ENCODE measurements at regions of chr17 and their contacts with region 1.

Region 1: DNA sequence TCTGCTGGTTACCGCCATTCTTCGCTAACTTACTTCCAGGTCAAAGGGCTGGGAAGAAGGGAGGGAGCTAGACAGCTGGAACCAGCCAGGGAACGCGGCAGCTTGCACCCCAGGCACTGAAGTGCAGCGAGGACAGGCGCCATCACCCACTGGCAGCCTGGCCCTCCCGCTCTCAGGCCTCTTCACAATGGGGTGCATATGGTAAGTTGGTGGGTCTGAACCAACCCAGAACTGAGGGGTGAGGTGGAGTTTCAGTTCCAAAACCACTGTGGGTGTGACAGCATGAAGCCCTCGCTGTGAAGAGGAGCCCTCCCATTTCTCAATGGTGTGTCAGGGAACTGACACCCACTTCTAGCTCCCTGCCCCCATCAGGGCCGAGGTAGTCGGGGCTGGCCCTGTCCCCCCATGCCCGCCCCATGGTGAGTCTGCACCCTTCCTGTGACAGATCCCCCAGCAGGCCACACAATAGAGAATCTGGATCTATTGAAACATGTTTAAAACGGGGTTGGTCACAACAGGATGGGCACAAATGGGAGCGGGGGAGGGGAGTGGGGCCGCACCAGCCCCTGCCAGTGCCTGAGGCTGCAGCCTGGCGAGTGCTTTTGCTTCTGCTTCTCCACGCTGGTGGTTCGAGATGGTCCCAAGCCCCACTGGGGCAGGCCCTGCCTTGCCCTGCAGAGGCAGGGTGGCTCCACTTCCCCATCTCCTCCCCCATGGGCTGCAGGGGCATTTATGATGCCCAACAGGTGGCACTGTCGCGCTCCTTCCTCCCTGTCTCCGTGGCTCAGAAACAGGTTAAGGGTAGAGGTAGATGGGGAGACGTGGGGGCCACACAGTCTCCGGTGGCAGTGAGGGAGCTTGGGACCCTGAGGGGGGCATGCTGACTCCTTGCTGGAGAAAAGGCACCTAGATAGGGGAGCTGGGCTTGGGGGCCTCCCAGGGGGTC is 2.3 kb downstream of the LIMD2 start:
- DNase-seq: peak; percentile 77 to 92 (median 84)
- ATAC-seq: peak; percentile 33
- H3K4me3 ChIP-seq: peak overlapping the region; percentile 98
- H3K4me3 Mint-ChIP-seq: peak overlapping the region; percentile 100
- H3K27ac ChIP-seq: peak overlapping the region; percentile 73 to 91
- H3K27ac Mint-ChIP-seq: peak overlapping the region; percentile 100
- H3K4me1 ChIP-seq: peaks cover 78% of the 10 kb centered on the region
- H3K4me1 Mint-ChIP-seq: peaks cover 74% of the 10 kb centered on the region
- H3K27me3 ChIP-seq: no peaks in the 10 kb centered on the region
- H3K27me3 Mint-ChIP-seq: peaks cover 5% of the 10 kb centered on the region
- CTCF ChIP-seq: peak; percentile 82

Region 2: GRCh38 chr17:63349478-63350000 is 348.1 kb before region 1 on chr17:
- CTCF ChIA-PET with region 1: no interaction called
- POLR2A ChIA-PET with region 1: no interaction called
- intact Hi-C with region 1: no loop called
- DNase-seq: no peak
- ATAC-seq: no peak
- H3K4me3 ChIP-seq: no peak overlapping the region
- H3K4me3 Mint-ChIP-seq: no peak overlapping the region
- H3K27ac ChIP-seq: no peak overlapping the region
- H3K27ac Mint-ChIP-seq: no peak overlapping the region
- H3K4me1 ChIP-seq: no peaks in the 10 kb centered on the region
- H3K4me1 Mint-ChIP-seq: no peaks in the 10 kb centered on the region
- H3K27me3 ChIP-seq: no peaks in the 10 kb centered on the region
- H3K27me3 Mint-ChIP-seq: no peaks in the 10 kb centered on the region
- CTCF ChIP-seq: no peak

Region 3: DNA sequence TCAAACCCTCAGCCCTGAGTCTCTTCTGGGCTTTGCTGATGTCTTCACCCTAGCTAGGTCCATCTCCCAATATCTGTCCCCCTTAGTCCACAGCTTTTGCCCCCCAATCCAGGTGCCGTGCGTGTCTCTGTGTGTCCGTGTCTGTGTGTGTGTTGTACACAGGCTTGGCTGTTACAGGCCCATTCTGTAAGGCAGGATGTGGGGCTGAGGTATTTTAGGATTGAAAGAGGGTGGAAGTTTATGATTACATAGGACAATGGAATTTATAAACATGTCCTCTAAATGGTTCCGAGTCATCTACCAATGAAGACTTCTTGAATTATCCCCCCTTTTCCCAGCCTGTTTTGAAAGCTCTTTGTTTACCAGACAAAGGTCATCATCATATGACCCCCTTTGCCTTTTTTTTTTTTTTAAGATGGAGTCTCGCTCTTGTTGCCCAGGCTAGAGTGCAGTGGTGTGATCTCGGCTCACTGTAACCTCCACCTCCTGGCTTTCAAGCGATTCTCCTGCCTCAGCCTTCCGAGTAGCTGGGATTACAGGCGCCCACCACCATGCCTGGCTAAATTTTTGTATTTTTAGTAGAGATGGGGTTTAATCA is 198.9 kb before region 1 on chr17:
- CTCF ChIA-PET with region 1: no interaction called
- POLR2A ChIA-PET with region 1: no interaction called
- intact Hi-C with region 1: no loop called
- DNase-seq: no peak
- ATAC-seq: no peak
- H3K4me3 ChIP-seq: no peak overlapping the region
- H3K4me3 Mint-ChIP-seq: no peak overlapping the region
- H3K27ac ChIP-seq: no peak overlapping the region
- H3K27ac Mint-ChIP-seq: no peak overlapping the region
- H3K4me1 ChIP-seq: no peaks in the 10 kb centered on the region
- H3K4me1 Mint-ChIP-seq: no peaks in the 10 kb centered on the region
- H3K27me3 ChIP-seq: no peaks in the 10 kb centered on the region
- H3K27me3 Mint-ChIP-seq: peaks cover 12% of the 10 kb centered on the region
- CTCF ChIP-seq: no peak

Region 4: GRCh38 chr17:63537991-63538692 is 159.5 kb before region 1 on chr17:
- CTCF ChIA-PET with region 1: no interaction called
- POLR2A ChIA-PET with region 1: no interaction called
- intact Hi-C with region 1: no loop called
- DNase-seq: peak in 1 of 14 experiments; percentile 7
- ATAC-seq: no peak
- H3K4me3 ChIP-seq: no peak overlapping the region
- H3K4me3 Mint-ChIP-seq: no peak overlapping the region
- H3K27ac ChIP-seq: no peak overlapping the region
- H3K27ac Mint-ChIP-seq: no peak overlapping the region
- H3K4me1 ChIP-seq: peaks cover 9% of the 10 kb centered on the region
- H3K4me1 Mint-ChIP-seq: peaks cover 4% of the 10 kb centered on the region
- H3K27me3 ChIP-seq: peaks cover 19 to 22% of the 10 kb centered on the region in 2 experiments
- H3K27me3 Mint-ChIP-seq: peaks cover 32% of the 10 kb centered on the region
- CTCF ChIP-seq: no peak

Region 5: DNA sequence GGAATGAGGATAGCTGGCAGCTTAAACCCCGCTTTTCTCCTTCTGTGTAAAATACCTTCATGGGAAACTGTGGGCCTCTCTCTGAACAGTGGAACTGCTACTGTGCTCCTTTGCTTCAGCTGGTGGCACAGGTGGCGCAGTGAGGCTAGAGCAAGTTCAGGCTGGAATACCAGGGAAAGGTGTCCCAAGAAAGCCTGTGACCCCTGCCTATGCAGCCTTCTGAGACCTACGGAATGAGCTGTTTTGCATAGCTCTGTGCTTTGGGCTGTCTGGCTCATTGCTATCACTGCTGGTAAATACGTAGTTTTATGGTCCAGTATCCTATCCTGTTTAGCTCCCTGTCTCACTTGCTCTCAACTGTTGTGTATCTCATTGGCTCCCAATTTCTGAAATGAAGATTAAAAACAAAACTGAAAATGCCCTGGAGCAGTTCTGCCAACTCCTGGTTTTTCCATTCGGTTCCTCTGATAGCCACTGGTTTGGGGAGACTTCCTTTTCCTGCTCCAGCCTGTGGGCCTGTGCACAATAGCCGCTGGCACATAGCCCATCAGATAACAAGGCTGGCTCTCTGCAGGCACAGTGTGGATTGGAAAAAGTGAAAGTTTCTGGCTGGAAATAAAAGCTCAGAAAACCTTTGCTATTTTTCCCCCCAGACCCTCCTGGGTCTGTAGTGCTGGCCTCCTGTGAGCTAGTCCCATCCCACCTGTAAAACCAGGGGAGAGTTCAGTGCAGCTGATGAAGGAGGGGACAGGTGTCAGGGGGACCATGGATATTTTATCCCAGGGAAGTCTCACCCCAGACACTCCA is 21.8 kb before region 1 on chr17:
- CTCF ChIA-PET with region 1: interaction called, 3 read pairs
- POLR2A ChIA-PET with region 1: interaction called, 21 read pairs
- intact Hi-C with region 1: no loop called
- DNase-seq: no peak
- ATAC-seq: no peak
- H3K4me3 ChIP-seq: no peak overlapping the region
- H3K4me3 Mint-ChIP-seq: no peak overlapping the region
- H3K27ac ChIP-seq: no peak overlapping the region
- H3K27ac Mint-ChIP-seq: peak overlapping the region; percentile 49
- H3K4me1 ChIP-seq: no peaks in the 10 kb centered on the region
- H3K4me1 Mint-ChIP-seq: peaks cover 18% of the 10 kb centered on the region
- H3K27me3 ChIP-seq: no peaks in the 10 kb centered on the region
- H3K27me3 Mint-ChIP-seq: no peaks in the 10 kb centered on the region
- CTCF ChIP-seq: no peak

Region 6: GRCh38 chr17:63714547-63715277 is 17.1 kb after region 1 on chr17:
- CTCF ChIA-PET with region 1: interaction called, 169 read pairs
- POLR2A ChIA-PET with region 1: interaction called, 844 read pairs
- intact Hi-C with region 1: loop called (anchors 1 kb)
- DNase-seq: no peak
- ATAC-seq: no peak
- H3K4me3 ChIP-seq: no peak overlapping the region
- H3K4me3 Mint-ChIP-seq: no peak overlapping the region
- H3K27ac ChIP-seq: no peak overlapping the region
- H3K27ac Mint-ChIP-seq: no peak overlapping the region
- H3K4me1 ChIP-seq: peaks cover 13% of the 10 kb centered on the region
- H3K4me1 Mint-ChIP-seq: peaks cover 12% of the 10 kb centered on the region
- H3K27me3 ChIP-seq: no peaks in the 10 kb centered on the region
- H3K27me3 Mint-ChIP-seq: no peaks in the 10 kb centered on the region
- CTCF ChIP-seq: no peak

Region 7: DNA sequence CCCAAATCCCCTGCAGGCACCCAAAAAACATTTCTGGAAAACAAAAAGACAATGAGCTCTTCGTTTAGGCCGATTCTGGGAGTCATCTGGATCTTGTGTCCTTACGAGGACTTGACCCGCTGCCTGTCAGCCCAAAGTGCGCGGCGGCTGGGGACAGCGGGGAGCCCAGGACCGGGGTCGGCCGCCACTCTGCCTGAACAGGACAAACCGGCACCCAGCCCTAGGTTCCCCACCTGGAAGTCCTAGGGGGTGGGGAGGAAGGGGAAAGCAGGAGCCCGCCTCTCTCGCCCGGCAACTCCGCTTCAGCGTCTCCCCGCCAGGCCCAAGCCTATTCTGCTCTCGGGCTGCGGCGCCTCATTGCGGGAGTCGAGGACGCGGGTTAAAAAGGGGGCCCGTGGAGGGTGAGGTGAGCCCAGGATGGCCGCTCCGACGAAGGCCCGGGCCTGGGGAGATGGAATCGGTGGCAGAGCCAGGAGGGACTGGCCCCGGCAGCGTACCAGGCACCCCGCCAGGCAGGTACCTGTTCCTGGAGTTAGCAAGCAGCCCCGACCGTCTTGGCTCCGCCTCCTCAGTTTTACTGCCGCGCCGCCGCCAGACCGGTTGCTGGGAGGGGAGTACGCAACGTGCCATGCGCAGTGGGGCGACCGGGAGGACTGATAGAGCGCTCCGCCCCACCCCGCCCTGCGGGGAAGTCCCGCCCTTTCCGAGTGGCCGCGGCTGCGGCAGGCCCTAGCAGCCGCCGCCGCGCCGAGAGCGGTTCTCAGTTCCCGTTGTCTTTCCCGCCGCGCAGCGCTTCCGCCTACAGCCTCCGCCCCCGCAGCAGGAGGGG is 43.8 kb after region 1 on chr17 and contains the start of gene STRADA:
- CTCF ChIA-PET with region 1: interaction called, 12 read pairs
- POLR2A ChIA-PET with region 1: interaction called, 212 read pairs
- intact Hi-C with region 1: loop called (anchors 1 to 2 kb)
- DNase-seq: peak; percentile 98 to 100 (median 99)
- ATAC-seq: peak; percentile 88
- H3K4me3 ChIP-seq: peak within 1 kb of the TSS; percentile 95
- H3K4me3 Mint-ChIP-seq: peak within 1 kb of the TSS; percentile 93
- H3K27ac ChIP-seq: peak within 1 kb of the TSS; percentile 94
- H3K27ac Mint-ChIP-seq: peak within 1 kb of the TSS; percentile 91
- H3K4me1 ChIP-seq: peaks cover 33% of the 10 kb centered on the region
- H3K4me1 Mint-ChIP-seq: peaks cover 24% of the 10 kb centered on the region
- H3K27me3 ChIP-seq: no peaks in the 10 kb centered on the region
- H3K27me3 Mint-ChIP-seq: no peaks in the 10 kb centered on the region
- CTCF ChIP-seq: no peak
- total RNA-seq, gene STRADA: 50.9 to 51.0 TPM

Region 8: DNA sequence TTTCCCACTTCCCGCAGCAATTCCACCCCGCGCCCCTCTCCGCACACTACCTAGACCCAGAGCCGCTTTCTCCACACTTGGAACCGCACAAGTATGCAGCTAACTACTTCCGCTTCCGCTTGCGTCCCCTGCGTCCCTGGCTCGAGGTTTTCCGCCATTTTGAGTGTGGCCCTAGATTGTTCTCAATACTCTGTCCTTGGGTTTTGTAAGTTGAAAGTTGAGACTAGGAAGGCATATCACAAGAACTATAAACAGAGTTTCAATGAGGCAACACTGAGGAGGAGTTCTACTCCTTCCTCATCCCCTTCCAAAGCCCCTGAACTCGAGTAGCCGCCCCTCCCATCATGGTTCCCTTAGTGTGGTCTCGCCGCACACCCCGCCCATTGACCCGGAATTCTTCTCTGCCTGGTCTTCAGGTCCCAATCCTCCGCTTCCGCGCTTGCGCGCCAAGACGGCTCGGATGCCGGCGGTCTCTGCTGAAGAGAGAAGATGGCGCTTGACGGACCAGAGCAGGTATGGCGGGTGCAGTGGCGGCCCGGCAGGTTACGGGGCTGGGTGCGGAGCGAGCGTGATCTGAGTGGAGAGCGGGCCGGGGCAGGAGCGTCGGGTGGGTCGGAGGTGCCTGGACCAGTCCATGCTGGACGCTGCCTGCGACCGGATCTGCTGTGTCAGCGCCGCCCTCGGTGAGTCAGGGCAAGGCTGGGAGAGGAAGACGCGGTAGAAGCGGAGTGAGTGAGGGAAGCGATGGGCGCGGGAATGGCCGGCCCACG is 129.6 kb after region 1 on chr17 and contains the starts of genes FTSJ3 and PSMC5:
- CTCF ChIA-PET with region 1: no interaction called
- POLR2A ChIA-PET with region 1: interaction called, 16 read pairs
- intact Hi-C with region 1: loop called (anchors 2 to 5 kb)
- DNase-seq: peak; percentile 91 to 98 (median 95)
- ATAC-seq: peak; percentile 93
- H3K4me3 ChIP-seq: peak within 1 kb of the TSS; percentile 83
- H3K4me3 Mint-ChIP-seq: peak within 1 kb of the TSS; percentile 94
- H3K27ac ChIP-seq: peak within 1 kb of the TSS; percentile 77 to 96
- H3K27ac Mint-ChIP-seq: peak within 1 kb of the TSS; percentile 96
- H3K4me1 ChIP-seq: peaks cover 69% of the 10 kb centered on the region
- H3K4me1 Mint-ChIP-seq: peaks cover 75% of the 10 kb centered on the region
- H3K27me3 ChIP-seq: no peaks in the 10 kb centered on the region
- H3K27me3 Mint-ChIP-seq: no peaks in the 10 kb centered on the region
- CTCF ChIP-seq: peak; percentile 65
- total RNA-seq, gene FTSJ3: 47.6 to 51.1 TPM
- total RNA-seq, gene PSMC5: 83.1 to 84.6 TPM

Region 9: GRCh38 chr17:63842540-63843386 is 145.1 kb after region 1 on chr17 and contains the start of gene SMARCD2:
- CTCF ChIA-PET with region 1: interaction called, 3 read pairs
- POLR2A ChIA-PET with region 1: interaction called, 20 read pairs
- intact Hi-C with region 1: no loop called
- DNase-seq: peak; percentile 98 to 100 (median 99)
- ATAC-seq: peak; percentile 88
- H3K4me3 ChIP-seq: peak within 1 kb of the TSS; percentile 85
- H3K4me3 Mint-ChIP-seq: peak within 1 kb of the TSS; percentile 94
- H3K27ac ChIP-seq: peak within 1 kb of the TSS; percentile 85 to 93
- H3K27ac Mint-ChIP-seq: peak within 1 kb of the TSS; percentile 91
- H3K4me1 ChIP-seq: peaks cover 57% of the 10 kb centered on the region
- H3K4me1 Mint-ChIP-seq: peaks cover 50% of the 10 kb centered on the region
- H3K27me3 ChIP-seq: no peaks in the 10 kb centered on the region
- H3K27me3 Mint-ChIP-seq: no peaks in the 10 kb centered on the region
- CTCF ChIP-seq: no peak
- total RNA-seq, gene SMARCD2: 102 to 111 TPM

Region 10: DNA sequence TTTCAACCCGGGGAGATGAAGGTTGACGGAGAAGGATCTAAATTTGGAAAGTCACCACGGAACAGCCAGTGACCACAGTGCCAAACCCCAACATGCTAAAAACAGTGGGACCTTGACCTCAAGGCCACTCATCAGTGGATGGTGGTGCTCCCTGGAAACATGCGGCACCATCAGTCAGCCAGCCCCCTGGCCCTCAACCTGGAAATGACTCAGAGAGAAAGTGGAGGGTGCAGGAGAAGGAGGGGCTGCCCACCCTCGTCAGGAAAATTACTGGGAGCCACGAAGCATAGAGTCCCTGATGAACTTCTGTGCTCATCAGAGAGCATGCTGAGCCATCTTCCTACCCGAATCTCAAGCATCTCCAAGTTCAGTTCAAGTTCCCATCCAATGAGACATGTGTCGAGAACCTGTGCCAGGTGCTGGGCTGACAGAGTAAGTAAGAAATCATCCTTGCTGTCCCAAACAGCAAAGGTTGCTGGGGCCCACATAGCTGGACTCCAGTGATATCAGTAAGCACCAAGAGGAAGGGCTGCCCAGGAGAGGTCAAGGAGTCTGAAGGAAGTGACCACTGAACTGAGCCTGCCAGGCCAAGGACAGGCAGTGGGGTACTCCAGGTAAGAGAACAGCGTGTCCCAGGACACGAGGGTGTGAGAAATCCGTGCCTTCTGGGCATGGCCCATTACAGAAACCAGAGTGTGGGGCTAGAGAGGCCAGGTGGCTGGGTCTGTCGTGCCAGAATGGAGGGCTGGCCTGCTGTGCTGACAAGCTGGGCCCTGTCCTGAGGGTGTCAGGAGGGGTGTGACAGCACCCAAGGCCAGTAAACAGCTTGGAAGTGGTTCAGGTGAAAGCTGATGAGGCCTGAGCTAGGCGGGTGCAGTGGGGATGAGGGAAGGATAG is 687.8 kb after region 1 on chr17:
- CTCF ChIA-PET with region 1: no interaction called
- POLR2A ChIA-PET with region 1: no interaction called
- intact Hi-C with region 1: no loop called
- DNase-seq: peak in 4 of 14 experiments; percentile 33 to 58 (median 52)
- ATAC-seq: no peak
- H3K4me3 ChIP-seq: no peak overlapping the region
- H3K4me3 Mint-ChIP-seq: no peak overlapping the region
- H3K27ac ChIP-seq: no peak overlapping the region
- H3K27ac Mint-ChIP-seq: peak overlapping the region; percentile 24
- H3K4me1 ChIP-seq: peaks cover 26% of the 10 kb centered on the region
- H3K4me1 Mint-ChIP-seq: peaks cover 44% of the 10 kb centered on the region
- H3K27me3 ChIP-seq: no peaks in the 10 kb centered on the region
- H3K27me3 Mint-ChIP-seq: no peaks in the 10 kb centered on the region
- CTCF ChIP-seq: no peak

Measured in CD4-positive, alpha-beta T cell (primary cell).